ENCODE measurements at regions of chr9 and their contacts with region 1.

Region 1: GRCh38 chr9:5976674-5977397 is 38.6 kb downstream of the RANBP6 start:
- DNase-seq: no peak
- ATAC-seq: no peak
- H3K4me3 Mint-ChIP-seq: no peak overlapping the region
- H3K27ac Mint-ChIP-seq: peak overlapping the region; percentile 50
- H3K4me1 Mint-ChIP-seq: peaks cover 16% of the 10 kb centered on the region
- H3K27me3 Mint-ChIP-seq: no peaks in the 10 kb centered on the region
- CTCF ChIP-seq: no peak

Region 2: DNA sequence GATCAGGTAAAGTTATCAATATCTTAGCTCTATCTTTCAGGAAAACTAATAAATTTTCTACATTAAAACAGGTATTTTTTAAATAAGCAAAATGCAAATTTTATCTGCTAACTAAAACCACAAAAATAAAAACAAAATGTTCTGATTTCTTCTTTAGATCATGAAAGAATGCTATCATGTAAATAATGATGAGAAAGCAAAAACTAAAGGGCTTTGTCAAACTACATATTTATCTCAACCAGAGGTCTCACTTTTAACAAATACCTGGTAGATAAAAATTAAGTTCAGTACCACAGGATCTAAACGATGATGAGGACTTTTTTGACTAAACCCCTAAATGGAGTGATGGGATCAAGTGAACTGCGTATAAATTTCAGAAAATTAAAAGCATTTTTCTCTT is 35.6 kb before region 1 on chr9:
- CTCF ChIA-PET with region 1: no interaction called
- POLR2A ChIA-PET with region 1: no interaction called
- intact Hi-C with region 1: loop called (anchors 5 kb)
- DNase-seq: no peak
- ATAC-seq: no peak
- H3K4me3 Mint-ChIP-seq: no peak overlapping the region
- H3K27ac Mint-ChIP-seq: no peak overlapping the region
- H3K4me1 Mint-ChIP-seq: no peaks in the 10 kb centered on the region
- H3K27me3 Mint-ChIP-seq: no peaks in the 10 kb centered on the region
- CTCF ChIP-seq: no peak

Region 3: DNA sequence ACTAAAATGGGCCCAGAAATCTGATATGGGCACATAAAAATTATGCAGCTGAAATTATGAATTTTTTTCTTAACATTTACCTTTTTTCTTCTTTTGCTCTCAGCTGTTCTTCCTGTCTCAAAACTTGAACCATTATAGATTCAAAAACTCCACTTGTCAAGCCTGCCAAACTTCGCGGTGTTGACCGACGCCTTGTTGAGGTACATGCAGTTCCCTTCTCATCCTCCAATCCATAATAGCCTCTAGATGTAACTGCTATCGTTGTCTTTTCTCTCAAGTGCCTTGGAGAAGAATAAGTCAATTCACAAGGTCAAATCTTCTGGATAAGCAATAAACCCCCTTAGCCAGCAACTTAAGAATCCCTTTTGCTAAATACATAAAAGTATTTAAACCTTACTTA is 11.4 kb after region 1 on chr9:
- CTCF ChIA-PET with region 1: no interaction called
- POLR2A ChIA-PET with region 1: no interaction called
- intact Hi-C with region 1: loop called (anchors 2 kb)
- DNase-seq: no peak
- ATAC-seq: no peak
- H3K4me3 Mint-ChIP-seq: no peak overlapping the region
- H3K27ac Mint-ChIP-seq: no peak overlapping the region
- H3K4me1 Mint-ChIP-seq: peaks cover 8% of the 10 kb centered on the region
- H3K27me3 Mint-ChIP-seq: no peaks in the 10 kb centered on the region
- CTCF ChIP-seq: no peak